Activated CD8-positive, alpha-beta T cell treated with anti-CD3 and anti-CD28 coated beads, Interleukin-2, amount 10 ng/mL, durations not matched to agents 7 days and 5 days (primary cell): ENCODE measurements at regions of chr6 and their contacts with region 1.

Region 1: GRCh38 chr6:106097411-106098231 is 11.5 kb downstream of the PRDM1 start:
- DNase-seq: peak; percentile 76
- ATAC-seq: peak; percentile 78
- H3K4me3 Mint-ChIP-seq: peak overlapping the region; percentile 87
- H3K27ac Mint-ChIP-seq: peak overlapping the region; percentile 92
- H3K4me1 Mint-ChIP-seq: peaks cover 86% of the 10 kb centered on the region
- H3K27me3 Mint-ChIP-seq: peaks cover 2% of the 10 kb centered on the region

Region 2: DNA sequence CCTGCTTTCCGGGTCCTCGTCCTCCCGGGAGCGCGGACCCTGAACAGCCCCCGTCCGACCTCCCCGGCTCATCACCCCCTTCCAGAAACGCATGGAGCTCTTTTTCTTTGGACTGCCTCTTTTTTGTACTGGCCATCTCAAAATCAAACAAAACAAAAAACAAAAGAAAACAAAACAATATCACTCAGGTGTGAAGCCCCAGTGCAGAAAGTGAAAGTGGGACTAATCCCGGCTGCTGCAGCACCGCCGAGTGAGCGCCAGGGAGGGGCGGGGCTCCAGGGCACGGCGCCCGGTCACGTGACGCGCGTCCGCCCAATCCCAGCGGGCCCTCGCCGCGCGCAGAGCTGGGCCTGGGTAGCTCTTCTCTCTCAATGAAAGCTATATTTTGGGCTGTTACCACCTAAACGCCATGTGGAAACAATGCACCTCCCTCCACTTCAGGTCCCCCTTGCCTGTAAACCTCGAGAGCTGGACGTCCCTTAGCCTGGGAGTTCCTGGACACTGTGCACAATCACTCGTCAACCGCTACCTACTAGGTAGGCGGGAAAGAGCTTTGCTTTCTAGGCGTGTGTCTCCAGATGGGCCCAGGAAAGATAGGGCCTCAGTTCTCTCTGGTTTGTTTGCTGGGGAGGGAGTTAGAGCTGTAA is 105.2 kb before region 1 on chr6:
- CTCF ChIA-PET with region 1: interaction called, 4 read pairs
- POLR2A ChIA-PET with region 1: interaction called, 23 read pairs
- DNase-seq: peak; percentile 92
- ATAC-seq: peak; percentile 90
- H3K4me3 Mint-ChIP-seq: peak overlapping the region; percentile 95
- H3K27ac Mint-ChIP-seq: peak overlapping the region; percentile 90
- H3K4me1 Mint-ChIP-seq: peaks cover 49% of the 10 kb centered on the region
- H3K27me3 Mint-ChIP-seq: peaks cover 64% of the 10 kb centered on the region

Region 3: GRCh38 chr6:106085984-106086813 is 11.4 kb before region 1 on chr6 and contains the start of gene PRDM1:
- CTCF ChIA-PET with region 1: interaction called, 22 read pairs
- POLR2A ChIA-PET with region 1: interaction called, 23 read pairs
- DNase-seq: peak; percentile 87
- ATAC-seq: peak; percentile 96
- H3K4me3 Mint-ChIP-seq: peak within 1 kb of the TSS; percentile 84
- H3K27ac Mint-ChIP-seq: peak within 1 kb of the TSS; percentile 70
- H3K4me1 Mint-ChIP-seq: peaks cover 70% of the 10 kb centered on the region
- H3K27me3 Mint-ChIP-seq: peaks cover 30% of the 10 kb centered on the region
- total RNA-seq, gene PRDM1: 14.4 to 14.7 TPM

Region 4: DNA sequence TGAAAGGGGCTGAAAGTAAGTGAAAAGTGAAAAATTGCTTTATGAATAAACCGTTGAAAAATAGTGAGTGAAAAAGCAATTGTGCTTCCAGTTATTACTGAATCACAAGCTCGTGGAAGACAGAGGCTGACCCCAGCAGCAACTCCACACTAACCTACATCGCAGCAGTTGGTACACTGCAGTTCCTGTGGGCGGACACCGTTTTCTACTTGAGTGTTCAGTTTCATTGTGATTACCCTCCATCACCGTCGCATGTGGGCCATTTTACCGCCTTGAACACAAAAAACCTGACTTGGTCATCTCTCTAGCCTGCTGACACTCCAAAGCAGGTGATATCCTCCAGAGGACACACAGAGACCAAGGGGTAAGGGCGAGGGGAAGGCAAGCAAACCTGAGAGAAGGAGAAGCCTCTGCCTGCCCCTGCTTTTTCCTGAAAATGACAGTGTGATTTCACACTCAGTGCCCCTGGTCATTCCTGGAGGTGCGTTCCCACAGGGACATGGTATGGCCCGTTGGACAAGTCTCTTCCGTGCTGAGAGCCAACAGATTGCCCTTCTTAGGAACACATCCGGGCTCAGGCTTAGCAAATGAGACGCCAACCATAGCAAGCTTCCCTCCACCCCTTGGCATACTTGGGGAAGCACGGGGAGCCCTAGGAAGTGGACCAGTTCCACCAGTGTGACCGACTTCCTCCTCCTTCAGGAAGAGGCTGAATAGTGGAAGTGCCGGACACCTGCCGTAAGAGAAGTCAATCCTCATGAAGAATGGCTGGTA is 17.1 kb after region 1 on chr6:
- CTCF ChIA-PET with region 1: interaction called, 8 read pairs
- POLR2A ChIA-PET with region 1: interaction called, 23 read pairs
- DNase-seq: peak; percentile 64
- ATAC-seq: no peak
- H3K4me3 Mint-ChIP-seq: peak overlapping the region; percentile 48
- H3K27ac Mint-ChIP-seq: peak overlapping the region; percentile 83
- H3K4me1 Mint-ChIP-seq: peaks cover 87% of the 10 kb centered on the region
- H3K27me3 Mint-ChIP-seq: peaks cover 2% of the 10 kb centered on the region

Region 5: GRCh38 chr6:106141441-106142237 is 44.0 kb after region 1 on chr6:
- CTCF ChIA-PET with region 1: interaction called, 5 read pairs
- POLR2A ChIA-PET with region 1: interaction called, 27 read pairs
- DNase-seq: peak; percentile 85
- ATAC-seq: peak; percentile 87
- H3K4me3 Mint-ChIP-seq: peak overlapping the region; percentile 67
- H3K27ac Mint-ChIP-seq: peak overlapping the region; percentile 97
- H3K4me1 Mint-ChIP-seq: peaks cover 73% of the 10 kb centered on the region
- H3K27me3 Mint-ChIP-seq: no peaks in the 10 kb centered on the region

Region 6: DNA sequence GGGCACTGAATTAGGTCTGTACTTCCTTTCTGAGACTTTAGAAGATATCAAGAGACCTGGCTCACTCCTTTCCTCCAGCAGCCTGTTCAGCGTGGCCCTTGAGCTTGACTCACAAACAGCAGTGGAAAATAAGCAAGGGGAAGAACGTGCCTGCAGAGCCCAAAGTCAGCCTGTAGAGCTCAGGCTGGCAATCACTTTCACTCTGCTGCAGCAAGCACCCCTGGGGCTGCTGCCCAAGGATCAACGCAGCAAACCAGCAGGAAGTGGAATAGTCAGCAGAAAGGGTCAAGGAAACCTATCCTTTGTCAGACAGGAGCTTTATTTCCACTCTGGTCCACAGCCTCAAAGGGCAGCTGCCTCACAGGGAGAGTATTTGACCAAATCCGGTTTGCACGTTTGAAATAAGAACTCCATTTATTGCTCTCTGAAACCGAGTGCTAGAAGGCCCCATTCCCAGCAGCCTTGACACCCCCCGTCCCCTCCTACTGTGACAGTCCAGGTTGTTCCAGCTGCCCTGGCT is 65.9 kb after region 1 on chr6:
- CTCF ChIA-PET with region 1: interaction called, 6 read pairs
- POLR2A ChIA-PET with region 1: interaction called, 24 read pairs
- DNase-seq: peak; percentile 71
- ATAC-seq: peak; percentile 84
- H3K4me3 Mint-ChIP-seq: peak overlapping the region; percentile 34
- H3K27ac Mint-ChIP-seq: peak overlapping the region; percentile 93
- H3K4me1 Mint-ChIP-seq: peaks cover 65% of the 10 kb centered on the region
- H3K27me3 Mint-ChIP-seq: no peaks in the 10 kb centered on the region

Region 7: GRCh38 chr6:106181664-106182418 is 84.2 kb after region 1 on chr6:
- CTCF ChIA-PET with region 1: interaction called, 8 read pairs
- POLR2A ChIA-PET with region 1: interaction called, 10 read pairs
- DNase-seq: no peak
- ATAC-seq: no peak
- H3K4me3 Mint-ChIP-seq: no peak overlapping the region
- H3K27ac Mint-ChIP-seq: no peak overlapping the region
- H3K4me1 Mint-ChIP-seq: peaks cover 48% of the 10 kb centered on the region
- H3K27me3 Mint-ChIP-seq: no peaks in the 10 kb centered on the region